ENCODE measurements at regions of chr1 and their contacts with region 1.

Region 1: DNA sequence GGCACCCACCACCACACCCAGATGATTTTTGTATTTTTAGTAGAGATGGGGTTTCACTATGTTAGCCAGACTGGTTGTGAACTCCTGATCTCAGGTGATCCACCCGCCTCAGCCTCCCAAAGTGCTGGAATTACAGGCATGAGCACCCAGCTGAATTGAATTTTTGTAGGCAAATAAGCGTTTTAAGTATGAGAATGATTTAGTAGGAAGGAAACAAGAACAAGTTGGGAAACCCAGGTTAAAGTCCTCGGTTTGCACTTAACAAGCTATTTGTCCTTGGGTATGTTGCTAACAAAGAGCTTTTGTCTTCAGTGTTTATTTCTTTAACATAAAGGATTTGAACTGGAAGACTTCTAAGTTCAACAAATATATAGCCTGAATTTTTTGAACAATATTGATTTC is 23.9 kb downstream of the BTF3L4 start:
- DNase-seq: no peak
- ATAC-seq: no peak
- H3K4me3 ChIP-seq: no peak overlapping the region
- H3K27ac ChIP-seq: no peak overlapping the region
- H3K4me1 ChIP-seq: no peaks in the 10 kb centered on the region
- H3K27me3 ChIP-seq: no peaks in the 10 kb centered on the region
- CTCF ChIP-seq: no peak
- POLR2A ChIP-seq: no peak
- RAD21 ChIP-seq: no peak

Region 2: DNA sequence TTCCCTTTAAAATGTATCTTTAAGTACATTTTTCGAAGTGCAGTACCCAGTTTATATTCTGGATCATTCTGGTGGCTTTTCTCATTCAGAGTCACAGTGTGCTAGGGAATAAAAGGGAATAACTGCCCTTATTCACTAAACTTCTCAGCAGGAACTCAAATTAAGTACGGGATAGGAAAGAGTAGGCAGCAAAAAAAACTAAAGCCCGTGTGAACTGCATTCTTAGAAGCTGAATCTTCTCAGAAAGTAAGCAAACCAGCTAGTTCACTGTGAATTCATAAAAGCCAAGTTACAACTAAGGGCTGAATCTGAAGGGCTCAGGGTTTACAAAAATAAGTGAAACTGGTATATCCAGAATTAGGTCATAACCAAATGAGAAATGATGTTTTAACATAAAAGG is 346.4 kb after region 1 on chr1:
- CTCF ChIA-PET with region 1: no interaction called
- POLR2A ChIA-PET with region 1: interaction called, 12 read pairs
- dilution Hi-C with region 1: no loop called
- in situ Hi-C with region 1: no loop called
- intact Hi-C with region 1: no loop called
- DNase-seq: peak; percentile 86
- ATAC-seq: peak; percentile 89
- H3K4me3 ChIP-seq: no peak overlapping the region
- H3K27ac ChIP-seq: no peak overlapping the region
- H3K4me1 ChIP-seq: peaks cover 16% of the 10 kb centered on the region
- H3K27me3 ChIP-seq: no peaks in the 10 kb centered on the region
- CTCF ChIP-seq: no peak
- POLR2A ChIP-seq: no peak
- RAD21 ChIP-seq: no peak

Region 3: GRCh38 chr1:52574594-52574993 is 494.6 kb after region 1 on chr1:
- CTCF ChIA-PET with region 1: no interaction called
- POLR2A ChIA-PET with region 1: no interaction called
- dilution Hi-C with region 1: no loop called
- in situ Hi-C with region 1: no loop called
- intact Hi-C with region 1: no loop called
- DNase-seq: peak; percentile 98
- ATAC-seq: peak; percentile 96
- H3K4me3 ChIP-seq: no peak overlapping the region
- H3K27ac ChIP-seq: peak overlapping the region; percentile 28; the same call in 1 of the 2 replicates
- H3K4me1 ChIP-seq: peaks cover 8% of the 10 kb centered on the region
- H3K27me3 ChIP-seq: 0 out of 2 replicates have a peak, but pooled peaks cover 2% of the 10 kb centered on the region
- CTCF ChIP-seq: no peak
- POLR2A ChIP-seq: no peak
- RAD21 ChIP-seq: no peak

Measured in IMR-90 (cell line).